T-cell (primary cell): ENCODE measurements at regions of chr16 and their contacts with region 1.

Region 1: DNA sequence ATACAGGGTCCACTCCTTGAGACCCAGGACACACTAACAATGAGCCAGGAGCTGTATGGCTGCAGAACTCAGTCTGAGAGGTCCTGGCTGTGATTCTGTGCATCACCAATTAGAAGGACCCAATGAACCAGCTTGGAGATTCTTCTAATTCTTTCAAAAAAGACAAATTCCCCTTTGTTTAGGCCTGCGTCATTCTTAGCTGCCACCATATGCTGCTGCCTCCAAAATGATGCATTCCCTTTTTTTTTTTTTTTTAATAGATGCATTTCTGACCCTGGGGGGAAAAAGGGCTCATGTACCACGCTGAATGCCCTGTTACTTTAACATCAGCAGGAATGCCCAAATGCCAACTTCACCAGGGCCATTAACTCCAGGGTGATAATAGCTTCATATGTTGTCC is 28.5 kb downstream of the EMP2 start:
- DNase-seq: no peak
- ATAC-seq: no peak
- H3K4me3 ChIP-seq: no peak overlapping the region
- H3K4me3 Mint-ChIP-seq: no peak overlapping the region
- H3K27ac ChIP-seq: no peak overlapping the region
- H3K27ac Mint-ChIP-seq: no peak overlapping the region
- H3K4me1 ChIP-seq: no peaks in the 10 kb centered on the region
- H3K4me1 Mint-ChIP-seq: peaks cover 11 to 12% (median 12%) of the 10 kb centered on the region in 3 donors
- H3K27me3 ChIP-seq: peaks cover 0 to 14% of the 10 kb centered on the region in 2 experiments
- H3K27me3 Mint-ChIP-seq: peaks cover 23 to 29% of the 10 kb centered on the region in 2 donors

Region 2: DNA sequence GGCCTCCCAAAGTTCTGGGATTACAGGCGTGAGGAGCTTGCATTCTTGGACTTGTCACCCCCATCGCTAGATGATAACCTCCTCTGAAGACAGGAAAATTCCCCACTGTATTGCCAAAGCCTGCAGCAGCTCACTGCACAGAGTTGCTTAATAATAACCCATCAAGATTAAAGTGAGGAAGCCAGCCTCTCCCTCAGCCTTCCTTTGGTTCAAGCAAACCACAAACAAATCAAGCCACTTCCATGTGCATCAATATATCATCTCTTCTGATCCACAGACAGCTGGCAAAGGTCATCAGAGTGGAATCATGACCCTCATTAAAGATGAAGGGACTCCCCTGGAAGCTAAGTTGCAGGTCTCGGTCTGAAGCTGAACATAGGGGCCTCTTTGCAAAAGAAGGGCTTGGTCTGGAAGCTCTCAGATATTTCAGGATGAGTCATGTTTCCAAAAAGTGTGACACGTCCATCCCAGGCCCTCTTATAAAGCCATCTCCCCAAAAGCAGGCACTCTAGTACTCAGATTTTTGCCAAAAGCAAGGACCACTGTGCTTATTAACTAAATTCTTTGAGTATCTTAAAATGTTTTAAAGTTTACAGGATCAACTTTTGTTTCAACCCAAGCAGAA is 23.7 kb after region 1 on chr16:
- CTCF ChIA-PET with region 1: no interaction called
- POLR2A ChIA-PET with region 1: interaction called in 1 of 2 experiments, 10 read pairs
- DNase-seq: no peak
- ATAC-seq: no peak
- H3K4me3 ChIP-seq: no peak overlapping the region
- H3K4me3 Mint-ChIP-seq: no peak overlapping the region
- H3K27ac ChIP-seq: no peak overlapping the region
- H3K27ac Mint-ChIP-seq: no peak overlapping the region
- H3K4me1 ChIP-seq: no peaks in the 10 kb centered on the region
- H3K4me1 Mint-ChIP-seq: no peaks in the 10 kb centered on the region
- H3K27me3 ChIP-seq: peaks cover 7 to 38% of the 10 kb centered on the region in 2 experiments
- H3K27me3 Mint-ChIP-seq: peaks cover 23 to 29% of the 10 kb centered on the region in 2 donors